GM12878 (cell line): ENCODE measurements at regions of chr3 and their contacts with region 1.

Region 1: GRCh38 chr3:17841190-17841828 is 98.9 kb upstream of the TBC1D5 start:
- DNase-seq: peak; percentile 24
- ATAC-seq: peak; percentile 99
- H3K4me3 ChIP-seq: no peak overlapping the region
- H3K27ac ChIP-seq: no peak overlapping the region
- H3K4me1 ChIP-seq: no peaks in the 10 kb centered on the region
- H3K27me3 ChIP-seq: no peaks in the 10 kb centered on the region
- CTCF ChIP-seq: peak; percentile 96 to 97 (median 97)
- EP300 ChIP-seq: no peak
- POLR2A ChIP-seq: no peak
- RAD21 ChIP-seq: peak; percentile 98

Region 2: GRCh38 chr3:16600780-16601539 is 1240.3 kb before region 1 on chr3:
- CTCF ChIA-PET with region 1: interaction called, 10 read pairs
- POLR2A ChIA-PET with region 1: no interaction called
- RAD21 ChIA-PET with region 1: interaction called, 5 read pairs
- SMC1A ChIA-PET with region 1: interaction called, 6 read pairs
- in situ Hi-C with region 1: loop called (anchors 25 kb)
- intact Hi-C with region 1: no loop called
- DNase-seq: no peak
- ATAC-seq: peak; percentile 86
- H3K4me3 ChIP-seq: no peak overlapping the region
- H3K27ac ChIP-seq: no peak overlapping the region
- H3K4me1 ChIP-seq: peaks cover 7% of the 10 kb centered on the region
- H3K27me3 ChIP-seq: no peaks in the 10 kb centered on the region
- CTCF ChIP-seq: peak; percentile 56 to 81 (median 69)
- EP300 ChIP-seq: no peak
- POLR2A ChIP-seq: no peak
- RAD21 ChIP-seq: peak; percentile 96

Region 3: DNA sequence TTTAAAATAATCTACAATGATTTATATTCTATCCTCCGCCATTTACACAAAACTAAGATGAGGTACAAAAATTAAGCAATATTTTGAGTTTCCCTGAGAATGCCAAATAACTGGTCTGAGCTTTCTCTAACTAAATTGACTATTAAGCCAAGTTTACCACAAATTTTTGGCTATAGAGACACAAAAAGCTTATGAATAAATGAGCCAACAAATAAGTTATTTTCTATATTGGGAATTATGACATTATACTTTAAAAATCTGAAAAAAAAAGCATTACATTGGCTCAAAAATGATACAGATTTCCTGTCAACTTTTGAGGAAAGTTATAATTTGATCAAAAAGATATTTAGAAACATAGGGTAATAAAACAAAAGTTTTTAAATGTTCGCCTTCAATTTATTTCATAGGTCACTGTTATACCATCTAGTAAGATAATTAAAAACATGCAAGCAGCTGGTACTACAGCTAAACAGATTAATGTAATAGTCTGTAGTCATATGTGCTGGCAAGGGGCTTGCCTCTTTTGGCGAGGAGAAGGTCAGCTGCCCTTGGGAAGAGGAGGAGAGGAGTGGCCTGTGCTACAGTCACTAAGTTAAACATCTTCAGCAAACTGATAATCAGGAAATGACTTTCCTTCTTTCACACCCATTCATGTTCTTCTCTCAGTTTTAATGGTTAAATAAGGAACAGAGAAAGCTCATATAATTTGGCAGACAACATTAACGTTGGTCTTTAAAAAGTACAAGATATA is 417.3 kb before region 1 on chr3:
- CTCF ChIA-PET with region 1: interaction called, 67 read pairs
- POLR2A ChIA-PET with region 1: no interaction called
- RAD21 ChIA-PET with region 1: interaction called, 61 read pairs
- SMC1A ChIA-PET with region 1: interaction called, 58 read pairs
- in situ Hi-C with region 1: no loop called
- intact Hi-C with region 1: no loop called
- DNase-seq: no peak
- ATAC-seq: peak; percentile 90
- H3K4me3 ChIP-seq: no peak overlapping the region
- H3K27ac ChIP-seq: no peak overlapping the region
- H3K4me1 ChIP-seq: peaks cover 6% of the 10 kb centered on the region
- H3K27me3 ChIP-seq: no peaks in the 10 kb centered on the region
- CTCF ChIP-seq: no peak
- EP300 ChIP-seq: peak in 1 of 2 experiments; percentile 56; a peak in 1 of 4 replicates
- POLR2A ChIP-seq: no peak
- RAD21 ChIP-seq: no peak

Region 4: GRCh38 chr3:17553080-17553479 is 288.2 kb before region 1 on chr3:
- CTCF ChIA-PET with region 1: interaction called, 22 read pairs
- POLR2A ChIA-PET with region 1: no interaction called
- RAD21 ChIA-PET with region 1: interaction called, 24 read pairs
- SMC1A ChIA-PET with region 1: interaction called, 12 read pairs
- in situ Hi-C with region 1: no loop called
- intact Hi-C with region 1: loop called (anchors 5 kb)
- DNase-seq: no peak
- ATAC-seq: no peak
- H3K4me3 ChIP-seq: no peak overlapping the region
- H3K27ac ChIP-seq: no peak overlapping the region
- H3K4me1 ChIP-seq: no peaks in the 10 kb centered on the region
- H3K27me3 ChIP-seq: no peaks in the 10 kb centered on the region
- CTCF ChIP-seq: no peak
- EP300 ChIP-seq: no peak
- POLR2A ChIP-seq: no peak
- RAD21 ChIP-seq: no peak

Region 5: DNA sequence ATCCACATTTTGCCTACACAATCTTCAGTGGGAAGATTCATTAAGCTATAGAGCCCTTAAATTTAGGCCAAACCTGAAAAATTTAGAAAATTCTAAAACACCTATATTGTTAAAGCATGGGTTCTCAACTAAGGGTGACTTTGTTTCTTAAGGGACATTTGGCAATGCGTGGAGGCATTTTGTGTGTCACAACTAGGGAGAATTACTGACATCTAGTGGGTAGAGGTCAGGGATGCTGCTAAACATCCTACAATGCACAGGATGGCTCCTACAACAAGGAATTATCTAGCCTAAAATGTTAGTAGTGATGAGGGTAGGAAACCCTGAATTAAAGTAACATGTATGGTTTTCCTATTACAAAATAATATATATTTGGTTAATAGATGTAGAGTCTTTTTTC is 154.7 kb before region 1 on chr3:
- CTCF ChIA-PET with region 1: interaction called, 20 read pairs
- POLR2A ChIA-PET with region 1: no interaction called
- RAD21 ChIA-PET with region 1: interaction called, 3 read pairs
- SMC1A ChIA-PET with region 1: no interaction called
- in situ Hi-C with region 1: no loop called
- intact Hi-C with region 1: loop called (anchors 5 kb)
- DNase-seq: no peak
- ATAC-seq: peak; percentile 48
- H3K4me3 ChIP-seq: no peak overlapping the region
- H3K27ac ChIP-seq: no peak overlapping the region
- H3K4me1 ChIP-seq: no peaks in the 10 kb centered on the region
- H3K27me3 ChIP-seq: no peaks in the 10 kb centered on the region
- CTCF ChIP-seq: peak; percentile 21 to 32 (median 26); a peak in 3 of 6 replicates
- EP300 ChIP-seq: no peak
- POLR2A ChIP-seq: no peak
- RAD21 ChIP-seq: peak; percentile 58

Region 6: GRCh38 chr3:17724122-17724521 is 117.2 kb before region 1 on chr3:
- CTCF ChIA-PET with region 1: no interaction called
- POLR2A ChIA-PET with region 1: no interaction called
- RAD21 ChIA-PET with region 1: no interaction called
- SMC1A ChIA-PET with region 1: no interaction called
- in situ Hi-C with region 1: no loop called
- intact Hi-C with region 1: no loop called
- DNase-seq: no peak
- ATAC-seq: no peak
- H3K4me3 ChIP-seq: no peak overlapping the region
- H3K27ac ChIP-seq: no peak overlapping the region
- H3K4me1 ChIP-seq: no peaks in the 10 kb centered on the region
- H3K27me3 ChIP-seq: no peaks in the 10 kb centered on the region
- CTCF ChIP-seq: no peak
- EP300 ChIP-seq: no peak
- POLR2A ChIP-seq: no peak
- RAD21 ChIP-seq: no peak

Region 7: GRCh38 chr3:17852217-17852616 is 10.9 kb after region 1 on chr3:
- CTCF ChIA-PET with region 1: interaction called, 16 read pairs
- POLR2A ChIA-PET with region 1: no interaction called
- RAD21 ChIA-PET with region 1: interaction called, 6 read pairs
- SMC1A ChIA-PET with region 1: interaction called, 5 read pairs
- in situ Hi-C with region 1: no loop called
- intact Hi-C with region 1: no loop called
- DNase-seq: peak; percentile 25
- ATAC-seq: peak; percentile 94
- H3K4me3 ChIP-seq: no peak overlapping the region
- H3K27ac ChIP-seq: no peak overlapping the region
- H3K4me1 ChIP-seq: no peaks in the 10 kb centered on the region
- H3K27me3 ChIP-seq: no peaks in the 10 kb centered on the region
- CTCF ChIP-seq: no peak
- EP300 ChIP-seq: no peak
- POLR2A ChIP-seq: no peak
- RAD21 ChIP-seq: no peak

Region 8: DNA sequence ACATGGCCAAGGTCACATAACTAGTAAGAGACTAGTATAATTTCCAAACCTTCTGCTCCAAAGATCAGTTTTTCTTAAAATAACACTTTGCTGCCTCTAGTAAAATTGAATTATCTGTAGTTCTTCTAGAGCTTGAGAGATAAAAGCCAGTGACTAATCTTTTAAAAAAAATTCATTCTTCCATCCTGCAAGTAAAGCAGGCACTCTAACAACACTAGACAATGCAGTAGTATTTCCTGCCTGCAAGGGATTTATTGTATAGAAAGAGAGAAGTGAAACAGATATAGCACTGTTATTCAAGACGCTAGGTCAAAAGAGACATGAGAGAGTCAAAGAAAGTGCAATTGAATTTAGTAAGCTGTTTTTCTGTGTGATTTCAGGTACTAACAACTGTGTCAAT is 60.6 kb after region 1 on chr3:
- CTCF ChIA-PET with region 1: no interaction called
- POLR2A ChIA-PET with region 1: no interaction called
- RAD21 ChIA-PET with region 1: no interaction called
- SMC1A ChIA-PET with region 1: no interaction called
- in situ Hi-C with region 1: no loop called
- intact Hi-C with region 1: no loop called
- DNase-seq: no peak
- ATAC-seq: peak; percentile 86
- H3K4me3 ChIP-seq: no peak overlapping the region
- H3K27ac ChIP-seq: no peak overlapping the region
- H3K4me1 ChIP-seq: peaks cover 2% of the 10 kb centered on the region
- H3K27me3 ChIP-seq: no peaks in the 10 kb centered on the region
- CTCF ChIP-seq: no peak
- EP300 ChIP-seq: no peak
- POLR2A ChIP-seq: no peak
- RAD21 ChIP-seq: no peak